ENCODE measurements at regions of chrX and their contacts with region 1.

Region 1: GRCh38 chrX:95791876-95792275 is 892.8 kb upstream of the DIAPH2 start:
- ATAC-seq: no peak
- H3K4me3 ChIP-seq: no peak overlapping the region
- H3K27ac ChIP-seq: no peak overlapping the region
- H3K4me1 ChIP-seq: no peaks in the 10 kb centered on the region

Region 2: GRCh38 chrX:96211953-96212352 is 420.1 kb after region 1 on chrX:
- in situ Hi-C with region 1: loop called in 1 of 9 experiments (anchors 25 kb)
- ATAC-seq: no peak
- H3K4me3 ChIP-seq: no peak overlapping the region
- H3K27ac ChIP-seq: no peak overlapping the region
- H3K4me1 ChIP-seq: no peaks in the 10 kb centered on the region